Right ventricle myocardium superior (tissue), 1 donor: ENCODE measurements at regions of chr2 and their contacts with region 1.

Region 1: GRCh38 chr2:3303583-3304406 is 73.8 kb downstream of the EIPR1 start:
- DNase-seq: peak; percentile 91
- ATAC-seq: peak; percentile 100

Region 2: GRCh38 chr2:3001615-3002560 is 301.9 kb before region 1 on chr2:
- intact Hi-C with region 1: loop called (anchors 5 kb)
- DNase-seq: no peak
- ATAC-seq: peak; percentile 60